Thyroid gland (tissue), 4 donors: ENCODE measurements at regions of chr16 and their contacts with region 1.

Region 1: GRCh38 chr16:67667817-67668494 is 1.3 kb downstream of the C16orf86 start:
- DNase-seq: peak; percentile 91 to 93
- H3K4me3 ChIP-seq: peak overlapping the region in 1 of 3 donors; percentile 72
- H3K27ac ChIP-seq: peak overlapping the region in 2 of 3 donors; percentile 84 to 87
- H3K4me1 ChIP-seq: peaks cover 26 to 39% of the 10 kb centered on the region in 2 donors
- H3K27me3 ChIP-seq: no peaks in the 10 kb centered on the region
- CTCF ChIP-seq: peak; percentile 77 to 99 (median 94)
- POLR2A ChIP-seq: no peak

Region 2: GRCh38 chr16:67509016-67509415 is 158.9 kb before region 1 on chr16:
- intact Hi-C with region 1: no loop called
- DNase-seq: no peak
- H3K4me3 ChIP-seq: no peak overlapping the region
- H3K27ac ChIP-seq: no peak overlapping the region
- H3K4me1 ChIP-seq: peaks cover 0 to 6% of the 10 kb centered on the region in 2 donors
- H3K27me3 ChIP-seq: no peaks in the 10 kb centered on the region
- CTCF ChIP-seq: no peak
- POLR2A ChIP-seq: no peak

Region 3: DNA sequence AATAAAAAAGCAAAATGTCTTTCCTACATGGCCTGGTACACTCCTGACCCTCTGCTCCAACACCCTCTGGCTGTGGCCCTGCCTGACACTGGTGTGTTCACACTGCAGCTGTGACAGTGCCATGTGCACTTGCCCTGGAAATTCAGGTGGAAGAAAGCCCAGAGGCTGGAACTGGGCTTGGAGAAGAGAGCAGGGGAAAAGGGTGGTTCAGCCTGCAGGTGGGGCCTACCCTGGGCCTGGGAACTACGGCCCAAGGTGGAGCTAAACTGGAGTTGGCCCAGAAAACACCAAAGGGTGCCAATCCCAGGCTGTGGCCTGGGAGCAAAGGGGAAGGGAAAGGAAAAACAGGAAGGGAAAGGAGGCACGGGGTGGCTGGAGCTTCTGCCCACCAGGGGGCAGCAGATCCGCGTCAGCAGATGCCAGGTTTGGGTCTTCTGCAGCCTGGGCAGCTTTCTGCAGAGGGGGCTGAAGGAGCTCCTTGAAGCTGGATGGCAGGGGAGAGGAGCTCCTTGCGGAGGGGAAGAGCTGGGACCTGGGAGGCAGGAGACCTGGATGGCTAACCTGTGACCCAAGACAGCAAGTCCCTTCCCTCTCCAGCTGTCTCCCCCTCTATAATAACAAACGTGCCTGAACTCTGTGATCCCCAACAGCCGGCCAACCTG is 121.1 kb before region 1 on chr16:
- intact Hi-C with region 1: loop called (anchors 5 kb)
- DNase-seq: peak; percentile 79 to 81
- H3K4me3 ChIP-seq: no peak overlapping the region
- H3K27ac ChIP-seq: peak overlapping the region; percentile 2 to 30 (median 11)
- H3K4me1 ChIP-seq: peaks cover 6 to 42% of the 10 kb centered on the region in 2 donors
- H3K27me3 ChIP-seq: no peaks in the 10 kb centered on the region
- CTCF ChIP-seq: peak; percentile 73 to 94 (median 89)
- POLR2A ChIP-seq: peak in 1 of 2 donors; percentile 5

Region 4: DNA sequence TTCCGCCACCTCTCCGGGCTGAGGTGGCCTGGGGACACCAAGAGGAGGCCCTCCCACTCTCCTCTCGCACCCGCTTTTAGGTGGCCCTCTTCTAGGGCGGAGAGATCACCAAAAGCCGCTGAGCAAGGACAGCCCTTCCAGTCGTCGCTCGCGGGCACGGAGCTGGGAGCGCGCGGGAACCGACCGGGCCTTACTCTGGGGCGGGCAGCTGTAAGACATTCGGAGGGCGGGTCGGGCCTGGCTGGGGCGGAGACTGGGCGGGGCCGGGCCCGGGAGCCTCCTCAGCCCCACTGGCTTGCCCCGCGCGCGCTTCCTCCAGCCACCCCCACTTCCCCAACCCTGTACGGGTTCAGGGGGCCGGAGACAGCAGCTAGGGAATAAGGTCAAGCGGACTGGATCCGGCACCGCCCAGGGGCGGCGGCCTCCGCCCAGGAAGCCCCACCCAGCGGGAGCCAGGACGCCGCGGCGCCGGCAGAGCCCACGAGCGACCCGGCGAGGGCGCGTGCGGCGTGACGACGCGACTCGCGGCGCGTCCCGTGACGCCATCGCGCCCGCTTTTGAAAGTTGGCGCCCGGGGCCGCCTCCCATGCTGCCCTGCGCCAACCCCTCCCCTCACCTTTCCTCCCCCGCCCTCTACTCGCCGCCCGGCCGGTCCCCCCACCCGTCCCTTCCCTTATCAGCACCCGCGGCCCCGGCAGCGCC is 106.0 kb before region 1 on chr16:
- intact Hi-C with region 1: loop called (anchors 5 kb)
- DNase-seq: peak; percentile 96 to 97
- H3K4me3 ChIP-seq: peak overlapping the region; percentile 2 to 86 (median 37)
- H3K27ac ChIP-seq: peak overlapping the region; percentile 82 to 98 (median 94)
- H3K4me1 ChIP-seq: peaks cover 11 to 27% of the 10 kb centered on the region in 2 donors
- H3K27me3 ChIP-seq: no peaks in the 10 kb centered on the region
- CTCF ChIP-seq: no peak
- POLR2A ChIP-seq: peak in 1 of 2 donors; percentile 76

Region 5: GRCh38 chr16:67833418-67834241 is 165.7 kb after region 1 on chr16:
- intact Hi-C with region 1: no loop called
- DNase-seq: peak; percentile 91 to 92
- H3K4me3 ChIP-seq: peak overlapping the region; percentile 33 to 71 (median 68)
- H3K27ac ChIP-seq: peak overlapping the region in 2 of 3 donors; percentile 41 to 43
- H3K4me1 ChIP-seq: peaks cover 8 to 13% of the 10 kb centered on the region in 2 donors
- H3K27me3 ChIP-seq: no peaks in the 10 kb centered on the region
- CTCF ChIP-seq: no peak
- POLR2A ChIP-seq: peak in 1 of 2 donors; percentile 84

Region 6: GRCh38 chr16:67935402-67936123 is 267.6 kb after region 1 on chr16:
- intact Hi-C with region 1: loop called (anchors 10 kb)
- DNase-seq: peak; percentile 99
- H3K4me3 ChIP-seq: peak overlapping the region; percentile 77 to 97 (median 92)
- H3K27ac ChIP-seq: peak overlapping the region; percentile 81 to 95 (median 86)
- H3K4me1 ChIP-seq: peaks cover 7 to 15% of the 10 kb centered on the region in 2 donors
- H3K27me3 ChIP-seq: no peaks in the 10 kb centered on the region
- CTCF ChIP-seq: no peak
- POLR2A ChIP-seq: peak; percentile 71 to 81